HAP-1 (cell line): ENCODE measurements at regions of chr17 and their contacts with region 1.

Region 1: GRCh38 chr17:29369831-29370735 is 20.1 kb upstream of the TAOK1 start:
- DNase-seq: peak; percentile 73 to 84
- H3K4me3 ChIP-seq: no peak overlapping the region
- H3K4me1 ChIP-seq: peaks cover 32% of the 10 kb centered on the region
- H3K27me3 ChIP-seq: no peaks in the 10 kb centered on the region

Region 2: DNA sequence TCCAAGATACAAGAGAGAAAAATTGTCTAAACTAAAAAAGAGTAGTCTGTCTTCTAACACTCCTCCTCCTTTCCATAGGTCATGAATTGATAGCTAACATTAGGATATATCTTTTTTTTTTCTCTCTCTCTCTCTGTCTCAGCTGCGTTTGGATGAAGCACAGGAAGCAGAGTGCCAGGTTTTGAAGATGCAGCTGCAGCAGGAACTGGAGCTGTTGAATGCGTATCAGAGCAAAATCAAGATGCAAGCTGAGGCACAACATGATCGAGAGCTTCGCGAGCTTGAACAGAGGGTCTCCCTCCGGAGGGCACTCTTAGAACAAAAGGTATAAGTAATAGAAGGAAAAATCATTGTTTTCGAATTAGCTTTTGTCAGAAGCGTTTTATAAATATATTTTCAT is 163.9 kb after region 1 on chr17:
- in situ Hi-C with region 1: loop called (anchors 10 kb)
- DNase-seq: no peak
- H3K4me3 ChIP-seq: no peak overlapping the region
- H3K4me1 ChIP-seq: no peaks in the 10 kb centered on the region
- H3K27me3 ChIP-seq: no peaks in the 10 kb centered on the region